ENCODE measurements at regions of chr6 and their contacts with region 1.

Region 1: GRCh38 chr6:125790358-125791150 is at the start of gene NCOA7:
- DNase-seq: peak; percentile 86
- H3K4me3 Mint-ChIP-seq: peak within 1 kb of the TSS; percentile 86
- H3K27ac Mint-ChIP-seq: peak within 1 kb of the TSS; percentile 96
- H3K4me1 Mint-ChIP-seq: peaks cover 54% of the 10 kb centered on the region
- H3K27me3 Mint-ChIP-seq: no peaks in the 10 kb centered on the region
- total RNA-seq, gene NCOA7: 42.3 to 43.4 TPM

Region 2: GRCh38 chr6:125301435-125302391 is 488.8 kb before region 1 on chr6 and contains the start of gene HDDC2:
- CTCF ChIA-PET with region 1: interaction called, 12 read pairs
- POLR2A ChIA-PET with region 1: interaction called, 6 read pairs
- intact Hi-C with region 1: no loop called
- DNase-seq: peak; percentile 57
- H3K4me3 Mint-ChIP-seq: peak within 1 kb of the TSS; percentile 91
- H3K27ac Mint-ChIP-seq: peak within 1 kb of the TSS; percentile 95
- H3K4me1 Mint-ChIP-seq: peaks cover 54% of the 10 kb centered on the region
- H3K27me3 Mint-ChIP-seq: no peaks in the 10 kb centered on the region
- total RNA-seq, gene HDDC2: 88.9 to 92.3 TPM

Region 3: DNA sequence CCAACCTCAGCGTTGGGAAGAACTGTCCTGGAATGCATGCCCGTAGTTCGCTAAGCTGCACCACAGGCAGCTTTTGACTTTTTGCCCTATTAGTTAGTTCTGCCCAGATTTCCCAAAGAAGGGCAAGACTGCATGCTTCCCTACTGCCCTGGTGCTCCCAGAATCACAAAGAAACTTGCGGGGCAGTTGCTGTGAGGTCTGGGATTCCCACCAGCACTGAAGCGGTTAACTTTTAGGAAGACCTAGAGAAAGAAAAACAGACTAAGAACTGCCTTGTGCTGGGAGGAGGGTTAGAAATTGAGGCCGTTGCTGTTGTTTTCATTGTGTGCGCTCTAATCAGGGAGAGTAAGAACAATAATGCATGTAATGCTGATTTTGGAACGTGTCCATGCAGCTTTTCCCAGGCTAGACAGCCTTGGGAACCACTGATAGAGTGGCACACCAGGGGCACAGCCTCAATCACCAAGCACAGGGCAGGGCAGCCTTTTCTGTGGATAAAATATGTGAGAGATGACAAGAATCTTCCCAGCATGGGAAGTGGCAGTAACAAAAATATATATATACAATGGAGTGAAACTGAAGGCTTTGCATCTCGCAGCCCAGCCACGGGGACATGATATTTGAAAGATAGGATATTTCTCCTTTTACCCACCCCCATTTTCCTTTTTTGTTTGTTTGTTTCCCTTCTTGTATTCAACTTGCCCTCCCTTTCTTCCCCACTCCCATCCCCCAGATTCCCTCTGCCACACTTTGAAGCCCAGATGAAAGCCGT is 178.8 kb before region 1 on chr6:
- CTCF ChIA-PET with region 1: no interaction called
- POLR2A ChIA-PET with region 1: no interaction called
- intact Hi-C with region 1: no loop called
- DNase-seq: no peak
- H3K4me3 Mint-ChIP-seq: no peak overlapping the region
- H3K27ac Mint-ChIP-seq: no peak overlapping the region
- H3K4me1 Mint-ChIP-seq: no peaks in the 10 kb centered on the region
- H3K27me3 Mint-ChIP-seq: peaks cover 5% of the 10 kb centered on the region

Region 4: GRCh38 chr6:125623085-125623484 is 167.5 kb before region 1 on chr6:
- CTCF ChIA-PET with region 1: no interaction called
- POLR2A ChIA-PET with region 1: no interaction called
- intact Hi-C with region 1: no loop called
- DNase-seq: no peak
- H3K4me3 Mint-ChIP-seq: no peak overlapping the region
- H3K27ac Mint-ChIP-seq: no peak overlapping the region
- H3K4me1 Mint-ChIP-seq: no peaks in the 10 kb centered on the region
- H3K27me3 Mint-ChIP-seq: no peaks in the 10 kb centered on the region

Region 5: DNA sequence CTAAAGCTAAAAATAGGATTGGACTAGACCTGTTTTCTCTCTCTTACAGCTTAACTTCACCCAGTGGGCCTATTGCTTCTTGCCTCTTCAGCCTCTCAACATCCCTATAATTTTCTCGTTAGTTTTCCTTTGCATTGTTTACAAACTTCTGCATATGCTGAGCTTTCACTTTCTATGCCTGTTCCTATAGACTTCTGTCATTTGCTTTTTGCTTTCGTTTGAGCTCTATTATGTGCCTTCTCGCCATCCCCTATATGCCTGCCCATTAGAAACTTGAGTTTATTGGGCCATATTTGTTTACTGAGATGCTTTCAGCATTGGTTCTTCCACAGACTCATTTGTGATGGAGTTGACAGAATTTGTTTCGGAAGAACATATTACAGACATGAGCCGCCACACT is 41.1 kb after region 1 on chr6:
- CTCF ChIA-PET with region 1: interaction called, 9 read pairs
- POLR2A ChIA-PET with region 1: no interaction called
- intact Hi-C with region 1: loop called (anchors 2 kb)
- DNase-seq: no peak
- H3K4me3 Mint-ChIP-seq: peak overlapping the region; percentile 71
- H3K27ac Mint-ChIP-seq: peak overlapping the region; percentile 71
- H3K4me1 Mint-ChIP-seq: peaks cover 72% of the 10 kb centered on the region
- H3K27me3 Mint-ChIP-seq: no peaks in the 10 kb centered on the region

Region 6: GRCh38 chr6:125918681-125919566 is 128.4 kb after region 1 on chr6:
- CTCF ChIA-PET with region 1: interaction called, 14 read pairs
- POLR2A ChIA-PET with region 1: interaction called, 6 read pairs
- intact Hi-C with region 1: loop called (anchors 1 kb)
- DNase-seq: peak; percentile 65
- H3K4me3 Mint-ChIP-seq: peak overlapping the region; percentile 87
- H3K27ac Mint-ChIP-seq: peak overlapping the region; percentile 96
- H3K4me1 Mint-ChIP-seq: peaks cover 47% of the 10 kb centered on the region
- H3K27me3 Mint-ChIP-seq: no peaks in the 10 kb centered on the region

Region 7: GRCh38 chr6:125986300-125987025 is 195.9 kb after region 1 on chr6 and contains the start of gene TRMT11:
- CTCF ChIA-PET with region 1: interaction called, 7 read pairs
- POLR2A ChIA-PET with region 1: interaction called, 25 read pairs
- intact Hi-C with region 1: no loop called
- DNase-seq: peak; percentile 90
- H3K4me3 Mint-ChIP-seq: peak within 1 kb of the TSS; percentile 9
- H3K27ac Mint-ChIP-seq: no peak within 1 kb of the TSS
- H3K4me1 Mint-ChIP-seq: peaks cover 20% of the 10 kb centered on the region
- H3K27me3 Mint-ChIP-seq: no peaks in the 10 kb centered on the region
- total RNA-seq, gene TRMT11: 42.8 to 46.9 TPM